ENCODE measurements at regions of chr6 and their contacts with region 1.

Region 1: DNA sequence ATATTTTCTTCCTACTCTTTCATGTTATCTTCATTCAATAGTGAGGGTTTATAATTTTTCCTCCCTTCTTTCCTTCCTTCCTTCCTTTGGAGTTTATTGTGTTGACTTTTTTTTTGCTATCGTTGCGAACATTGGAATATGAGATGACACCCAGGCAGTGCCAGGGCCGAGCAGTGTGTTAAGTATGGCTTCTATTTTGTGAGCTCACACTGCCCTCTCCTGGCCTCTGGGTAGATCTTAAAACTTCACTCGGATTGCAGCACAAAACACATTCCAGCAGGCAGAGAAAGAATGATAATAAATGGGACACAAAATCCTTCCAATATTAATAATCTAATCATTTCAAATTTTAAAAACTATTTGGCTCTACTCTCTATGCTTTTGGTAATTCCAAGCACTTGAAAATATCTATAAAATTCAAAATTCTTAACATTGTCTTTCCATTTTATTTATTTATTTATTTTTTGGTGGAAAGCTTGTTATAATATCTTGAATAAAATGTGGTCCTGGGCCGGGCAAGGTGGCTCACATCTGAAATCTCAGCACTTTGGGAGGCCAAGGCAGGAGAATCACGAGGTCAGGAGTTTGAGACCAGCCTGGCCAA is 147.4 kb upstream of the OLIG3 start:
- DNase-seq: peak; percentile 45 to 76 (median 58)
- ATAC-seq: peak; percentile 98
- H3K4me3 ChIP-seq: no peak overlapping the region
- H3K27ac ChIP-seq: no peak overlapping the region
- H3K4me1 ChIP-seq: no peaks in the 10 kb centered on the region
- H3K27me3 ChIP-seq: peaks cover 9 to 10% of the 10 kb centered on the region in 2 experiments; a peak in 3 of 5 replicates
- CTCF ChIP-seq: peak; percentile 71 to 82 (median 75)
- EP300 ChIP-seq: no peak
- POLR2A ChIP-seq: no peak
- RAD21 ChIP-seq: peak; percentile 90 to 95

Region 2: GRCh38 chr6:136846046-136846445 is 795.5 kb before region 1 on chr6:
- CTCF ChIA-PET with region 1: no interaction called
- POLR2A ChIA-PET with region 1: no interaction called
- in situ Hi-C with region 1: loop called (anchors 25 kb)
- intact Hi-C with region 1: loop called (anchors 10 kb)
- DNase-seq: peak; percentile 49 to 75 (median 51)
- ATAC-seq: peak; percentile 85
- H3K4me3 ChIP-seq: no peak overlapping the region
- H3K27ac ChIP-seq: no peak overlapping the region
- H3K4me1 ChIP-seq: no peaks in the 10 kb centered on the region
- H3K27me3 ChIP-seq: no peaks in the 10 kb centered on the region
- CTCF ChIP-seq: peak; percentile 62 to 86 (median 68); a peak in 5 of 6 replicates
- EP300 ChIP-seq: no peak
- POLR2A ChIP-seq: no peak
- RAD21 ChIP-seq: peak; percentile 72 to 85

Region 3: GRCh38 chr6:136967876-136968752 is 673.5 kb before region 1 on chr6:
- CTCF ChIA-PET with region 1: interaction called, 3 read pairs
- POLR2A ChIA-PET with region 1: no interaction called
- in situ Hi-C with region 1: no loop called
- intact Hi-C with region 1: loop called (anchors 1 kb)
- DNase-seq: peak; percentile 83 to 86 (median 84)
- ATAC-seq: peak; percentile 99
- H3K4me3 ChIP-seq: no peak overlapping the region
- H3K27ac ChIP-seq: no peak overlapping the region
- H3K4me1 ChIP-seq: no peaks in the 10 kb centered on the region; a peak in 2 of 5 replicates
- H3K27me3 ChIP-seq: peaks cover 5 to 21% of the 10 kb centered on the region in 2 experiments; a peak in 4 of 5 replicates
- CTCF ChIP-seq: peak; percentile 84 to 86 (median 85)
- EP300 ChIP-seq: no peak
- POLR2A ChIP-seq: no peak
- RAD21 ChIP-seq: peak; percentile 68 to 80

Region 4: GRCh38 chr6:137089305-137089704 is 552.3 kb before region 1 on chr6:
- CTCF ChIA-PET with region 1: interaction called, 23 read pairs
- POLR2A ChIA-PET with region 1: no interaction called
- in situ Hi-C with region 1: loop called (anchors 10 kb)
- intact Hi-C with region 1: loop called (anchors 2 kb)
- DNase-seq: no peak
- ATAC-seq: no peak
- H3K4me3 ChIP-seq: no peak overlapping the region
- H3K27ac ChIP-seq: no peak overlapping the region
- H3K4me1 ChIP-seq: no peaks in the 10 kb centered on the region
- H3K27me3 ChIP-seq: peaks cover 4 to 5% of the 10 kb centered on the region in 2 experiments; a peak in 2 of 5 replicates
- CTCF ChIP-seq: no peak
- EP300 ChIP-seq: no peak
- POLR2A ChIP-seq: no peak
- RAD21 ChIP-seq: no peak

Region 5: GRCh38 chr6:137094411-137095008 is 547.1 kb before region 1 on chr6:
- CTCF ChIA-PET with region 1: interaction called, 23 read pairs
- POLR2A ChIA-PET with region 1: no interaction called
- in situ Hi-C with region 1: loop called (anchors 10 kb)
- intact Hi-C with region 1: loop called (anchors 2 kb)
- DNase-seq: peak; percentile 50 to 76 (median 64)
- ATAC-seq: peak; percentile 90
- H3K4me3 ChIP-seq: no peak overlapping the region
- H3K27ac ChIP-seq: no peak overlapping the region
- H3K4me1 ChIP-seq: no peaks in the 10 kb centered on the region
- H3K27me3 ChIP-seq: peaks cover 0 to 8% of the 10 kb centered on the region in 2 experiments; a peak in 1 of 5 replicates
- CTCF ChIP-seq: peak; percentile 68 to 91 (median 72)
- EP300 ChIP-seq: no peak
- POLR2A ChIP-seq: no peak
- RAD21 ChIP-seq: peak; percentile 97 to 98

Region 6: DNA sequence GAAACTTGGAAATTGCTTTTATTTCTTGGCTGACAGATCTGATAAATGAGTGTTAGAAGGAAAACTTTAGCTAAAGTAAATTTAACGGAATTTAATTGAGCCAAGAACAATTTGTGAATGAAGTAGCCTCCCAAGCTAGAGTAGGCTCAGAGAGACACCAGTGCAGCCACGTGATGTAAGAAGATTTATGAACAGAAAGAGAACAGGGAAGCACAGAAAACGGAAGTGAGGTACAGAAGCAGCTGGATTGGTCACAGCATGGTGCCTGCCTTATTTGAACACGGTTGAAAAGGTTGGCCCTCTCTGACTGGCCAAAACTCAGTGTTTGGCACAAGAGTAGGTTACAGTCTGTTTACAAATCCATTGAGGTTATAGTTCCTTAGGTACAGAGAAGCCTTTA is 392.9 kb before region 1 on chr6:
- CTCF ChIA-PET with region 1: no interaction called
- POLR2A ChIA-PET with region 1: no interaction called
- in situ Hi-C with region 1: no loop called
- intact Hi-C with region 1: no loop called
- DNase-seq: peak in 1 of 4 experiments; percentile 24
- ATAC-seq: peak; percentile 75
- H3K4me3 ChIP-seq: no peak overlapping the region
- H3K27ac ChIP-seq: no peak overlapping the region
- H3K4me1 ChIP-seq: no peaks in the 10 kb centered on the region; a peak in 1 of 5 replicates
- H3K27me3 ChIP-seq: peaks cover 7% of the 10 kb centered on the region in 2 experiments; a peak in 3 of 5 replicates
- CTCF ChIP-seq: no peak
- EP300 ChIP-seq: no peak
- POLR2A ChIP-seq: no peak
- RAD21 ChIP-seq: no peak

Region 7: GRCh38 chr6:137610702-137611101 is 30.9 kb before region 1 on chr6:
- CTCF ChIA-PET with region 1: no interaction called
- POLR2A ChIA-PET with region 1: no interaction called
- in situ Hi-C with region 1: no loop called
- intact Hi-C with region 1: no loop called
- DNase-seq: no peak
- ATAC-seq: no peak
- H3K4me3 ChIP-seq: no peak overlapping the region
- H3K27ac ChIP-seq: no peak overlapping the region
- H3K4me1 ChIP-seq: no peaks in the 10 kb centered on the region
- H3K27me3 ChIP-seq: peaks cover 4% of the 10 kb centered on the region in 2 experiments; a peak in 1 of 5 replicates
- CTCF ChIP-seq: no peak
- EP300 ChIP-seq: no peak
- POLR2A ChIP-seq: no peak
- RAD21 ChIP-seq: no peak